RWPE1 (cell line): ENCODE measurements at regions of chr6 and their contacts with region 1.

Region 1: DNA sequence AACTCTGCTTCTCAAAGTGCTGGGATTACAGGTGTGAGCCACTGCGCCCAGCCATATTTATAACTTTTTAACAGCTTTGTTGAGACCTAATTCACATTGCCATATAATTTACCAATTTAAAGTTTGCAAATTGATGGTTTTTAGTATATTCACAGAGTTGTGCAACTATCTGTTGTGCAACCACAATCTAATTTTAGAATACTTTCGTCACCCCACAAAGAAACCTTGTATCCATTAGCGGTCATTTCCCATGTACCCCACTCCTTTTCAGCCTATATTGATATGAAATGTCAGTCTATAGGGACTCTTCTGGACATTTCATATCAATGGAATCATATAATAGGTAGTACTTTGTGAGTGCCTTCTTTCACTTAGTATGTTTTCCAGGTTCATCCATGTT is 55.8 kb downstream of the FOXO3 start:
- DNase-seq: no peak
- H3K27ac ChIP-seq: peak overlapping the region; percentile 44; the same call in 1 of the 2 replicates
- CTCF ChIP-seq: no peak

Region 2: GRCh38 chr6:108294727-108295625 is 321.6 kb before region 1 on chr6 and contains the start of gene AFG1L:
- CTCF ChIA-PET with region 1: no interaction called
- POLR2A ChIA-PET with region 1: no interaction called
- DNase-seq: peak; percentile 90
- H3K27ac ChIP-seq: peak within 1 kb of the TSS; percentile 94
- CTCF ChIP-seq: no peak

Region 3: DNA sequence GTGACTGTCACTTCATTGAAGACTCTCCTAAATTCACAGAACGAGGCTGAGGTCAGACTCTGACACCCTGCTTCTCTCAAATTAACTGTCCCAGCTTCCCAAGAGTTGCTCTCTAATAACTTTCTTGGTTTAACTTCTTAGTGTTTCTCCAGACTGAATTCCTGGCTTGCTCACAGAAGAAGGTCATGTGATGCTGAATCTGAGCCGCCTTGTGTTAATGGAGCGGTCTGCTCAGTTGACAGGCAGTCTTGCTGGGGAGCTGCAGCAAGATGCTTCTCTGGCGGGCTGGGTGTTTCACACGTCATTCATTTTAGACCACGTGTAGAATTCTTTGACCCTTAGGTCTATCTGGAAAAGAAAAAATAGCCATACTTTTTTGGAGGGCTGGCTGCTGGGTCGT is 51.4 kb after region 1 on chr6:
- CTCF ChIA-PET with region 1: interaction called, 3 read pairs
- POLR2A ChIA-PET with region 1: interaction called, 10 read pairs
- DNase-seq: no peak
- H3K27ac ChIP-seq: peak overlapping the region; percentile 20; the same call in 1 of the 2 replicates
- CTCF ChIP-seq: no peak